Transverse colon (tissue), 4 donors: ENCODE measurements at regions of chr1 and their contacts with region 1.

Region 1: DNA sequence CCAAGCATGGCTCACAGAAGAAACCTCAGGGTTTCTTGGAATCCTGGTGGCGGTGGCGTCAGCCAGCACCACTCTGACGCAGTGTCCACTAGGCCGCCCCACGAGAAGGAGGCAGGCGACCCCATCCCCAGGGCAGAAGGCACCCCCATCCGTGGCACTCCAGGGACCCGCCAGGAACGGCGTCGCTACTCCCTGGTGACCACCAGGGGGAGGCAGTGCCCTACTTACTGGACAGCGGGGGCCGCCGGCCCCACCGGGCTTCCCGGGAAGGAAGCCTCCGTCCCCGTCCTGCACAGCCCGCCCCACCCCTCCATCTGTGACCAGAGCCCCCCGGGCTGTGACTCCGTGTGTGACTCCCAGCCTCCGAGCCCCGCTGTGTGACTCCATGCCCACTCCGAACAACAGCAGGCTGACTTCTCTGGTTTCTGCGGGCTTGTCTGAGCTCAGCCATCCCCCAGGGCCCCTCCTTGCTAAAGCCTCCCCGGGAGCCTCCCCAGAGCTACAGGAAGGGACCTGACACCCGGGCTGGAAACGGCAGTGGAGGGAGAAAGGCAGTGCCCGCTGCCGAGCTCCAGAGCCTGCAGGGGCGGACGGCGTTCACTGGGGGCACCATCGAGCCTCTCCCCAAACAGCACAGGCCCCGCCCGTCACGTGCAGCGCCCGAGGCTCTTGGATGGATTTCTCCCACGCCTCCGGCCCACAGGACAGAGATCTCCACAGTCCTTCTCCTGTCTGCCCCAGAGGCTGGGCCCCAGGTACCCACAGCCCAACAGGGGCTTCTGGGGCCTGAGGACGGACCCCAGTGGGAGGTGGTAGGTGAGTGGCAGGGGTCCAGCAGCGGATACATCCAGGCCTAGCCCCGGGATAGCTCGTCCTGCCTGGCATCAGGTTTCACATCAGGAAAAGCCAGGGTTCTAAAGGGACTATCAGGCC is 21.1 kb downstream of the KIF17 start:
- DNase-seq: peak; percentile 84
- H3K4me3 ChIP-seq: peak overlapping the region; percentile 46 to 65 (median 52)
- H3K27ac ChIP-seq: peak overlapping the region; percentile 63 to 84 (median 82)
- H3K4me1 ChIP-seq: peaks cover 0 to 12% (median 6%) of the 10 kb centered on the region in 4 donors
- H3K27me3 ChIP-seq: no peaks in the 10 kb centered on the region
- CTCF ChIP-seq: peak; percentile 85 to 97 (median 91)
- EP300 ChIP-seq: no peak
- POLR2A ChIP-seq: no peak

Region 2: DNA sequence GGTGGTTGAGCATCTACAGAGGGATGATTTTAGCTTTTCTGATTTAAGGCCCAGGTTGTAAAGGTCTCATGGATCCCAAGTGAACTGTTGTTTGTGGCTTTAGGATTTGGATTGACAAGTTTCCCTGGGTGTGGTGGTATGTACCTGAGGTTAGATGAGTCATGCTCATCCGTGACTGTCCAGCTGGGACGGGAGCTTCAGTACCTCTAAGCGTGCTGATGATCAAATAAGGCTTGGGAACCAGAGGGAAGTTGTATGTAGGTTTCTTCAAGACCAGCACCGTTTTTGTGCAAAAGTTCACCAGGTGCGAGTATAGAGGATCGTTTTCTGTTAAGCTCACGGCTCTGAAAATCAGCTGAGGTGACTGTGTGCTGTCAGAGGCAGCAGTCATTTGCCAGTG is 793.1 kb before region 1 on chr1:
- in situ Hi-C with region 1: no loop called
- intact Hi-C with region 1: no loop called
- DNase-seq: no peak
- H3K4me3 ChIP-seq: no peak overlapping the region
- H3K27ac ChIP-seq: no peak overlapping the region
- H3K4me1 ChIP-seq: no peaks in the 10 kb centered on the region
- H3K27me3 ChIP-seq: no peaks in the 10 kb centered on the region
- CTCF ChIP-seq: no peak
- EP300 ChIP-seq: no peak
- POLR2A ChIP-seq: no peak

Region 3: GRCh38 chr1:20661207-20662109 is 35.2 kb before region 1 on chr1 and contains the start of gene DDOST:
- in situ Hi-C with region 1: no loop called
- intact Hi-C with region 1: no loop called
- DNase-seq: peak; percentile 96
- H3K4me3 ChIP-seq: peak within 1 kb of the TSS; percentile 75 to 99 (median 94)
- H3K27ac ChIP-seq: peak within 1 kb of the TSS; percentile 82 to 91 (median 84)
- H3K4me1 ChIP-seq: peaks cover 11 to 22% (median 19%) of the 10 kb centered on the region in 4 donors
- H3K27me3 ChIP-seq: no peaks in the 10 kb centered on the region
- CTCF ChIP-seq: peak in 4 of 5 experiments; percentile 30 to 61 (median 44)
- EP300 ChIP-seq: no peak
- POLR2A ChIP-seq: peak; percentile 51
- total RNA-seq, gene DDOST: 70.3 to 157 (median 105) TPM

Region 4: DNA sequence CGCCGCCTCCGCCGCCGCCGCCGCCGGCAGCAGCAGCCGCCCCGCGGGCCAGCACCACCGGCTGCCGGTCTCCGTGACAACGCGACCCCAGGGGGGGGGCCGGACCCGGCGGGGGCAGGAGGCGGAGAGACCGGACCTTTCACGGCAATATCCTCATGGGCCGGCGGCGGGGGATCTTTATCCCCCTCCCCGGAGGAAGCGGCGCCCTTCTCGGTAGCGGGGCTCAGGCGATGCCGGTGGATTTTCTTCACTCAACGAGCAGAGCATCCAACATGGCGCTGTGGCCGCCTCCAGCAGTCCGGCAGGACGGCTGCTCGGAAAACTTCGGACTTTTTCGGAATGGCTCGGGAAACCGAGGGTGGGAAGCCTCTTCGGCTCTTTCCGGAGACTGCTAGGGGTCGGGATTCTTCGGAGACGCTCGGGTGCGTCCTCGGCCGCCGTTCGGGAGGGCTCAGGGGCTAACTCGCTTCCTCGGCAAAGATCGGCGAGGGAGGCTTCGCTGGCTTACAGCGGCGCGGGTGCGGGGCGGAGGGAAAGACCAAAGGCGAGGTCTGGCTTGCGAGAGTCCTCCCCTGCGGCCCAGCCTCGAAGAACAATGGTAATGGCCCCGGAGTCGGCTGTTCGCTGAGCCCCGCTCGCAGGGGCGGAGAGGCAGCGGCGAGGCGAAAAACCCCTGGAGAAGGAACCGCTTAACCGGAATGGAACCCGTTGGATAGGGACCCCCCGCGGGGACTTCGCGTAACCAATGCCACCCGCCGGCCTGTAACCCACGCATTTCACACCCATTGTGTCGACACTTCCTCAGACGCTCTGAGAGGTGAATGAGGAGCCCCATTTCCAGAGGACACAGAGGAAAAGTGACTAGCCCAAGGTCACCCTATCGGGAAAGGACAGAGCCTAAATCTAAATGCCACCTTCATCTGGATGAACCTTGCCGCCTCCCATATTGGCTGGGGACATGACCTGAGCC is 480.2 kb after region 1 on chr1 and contains the start of gene EIF4G3:
- in situ Hi-C with region 1: loop called in 1 of 4 experiments (anchors 25 kb)
- intact Hi-C with region 1: no loop called
- DNase-seq: peak; percentile 99
- H3K4me3 ChIP-seq: peak within 1 kb of the TSS; percentile 85 to 96 (median 92)
- H3K27ac ChIP-seq: peak within 1 kb of the TSS; percentile 95 to 98 (median 98)
- H3K4me1 ChIP-seq: peaks cover 7 to 24% (median 16%) of the 10 kb centered on the region in 4 donors
- H3K27me3 ChIP-seq: no peaks in the 10 kb centered on the region
- CTCF ChIP-seq: no peak
- EP300 ChIP-seq: no peak
- POLR2A ChIP-seq: peak; percentile 60
- total RNA-seq, gene EIF4G3: 82.1 to 143 (median 101) TPM

Region 5: GRCh38 chr1:21189906-21190500 is 493.3 kb after region 1 on chr1:
- in situ Hi-C with region 1: loop called in 3 of 4 experiments (anchors 10 to 25 kb)
- intact Hi-C with region 1: loop called (anchors 5 kb)
- DNase-seq: no peak
- H3K4me3 ChIP-seq: no peak overlapping the region
- H3K27ac ChIP-seq: peak overlapping the region; percentile 67 to 83 (median 82)
- H3K4me1 ChIP-seq: peaks cover 0 to 30% (median 19%) of the 10 kb centered on the region in 4 donors
- H3K27me3 ChIP-seq: no peaks in the 10 kb centered on the region
- CTCF ChIP-seq: no peak
- EP300 ChIP-seq: no peak
- POLR2A ChIP-seq: no peak

Region 6: GRCh38 chr1:21200767-21201166 is 504.1 kb after region 1 on chr1:
- in situ Hi-C with region 1: loop called (anchors 10 to 25 kb)
- intact Hi-C with region 1: loop called (anchors 5 kb)
- DNase-seq: no peak
- H3K4me3 ChIP-seq: no peak overlapping the region
- H3K27ac ChIP-seq: no peak overlapping the region
- H3K4me1 ChIP-seq: no peaks in the 10 kb centered on the region
- H3K27me3 ChIP-seq: no peaks in the 10 kb centered on the region
- CTCF ChIP-seq: no peak
- EP300 ChIP-seq: no peak
- POLR2A ChIP-seq: no peak

Region 7: GRCh38 chr1:21216835-21217811 is 520.5 kb after region 1 on chr1:
- in situ Hi-C with region 1: loop called in 1 of 4 experiments (anchors 25 kb)
- intact Hi-C with region 1: no loop called
- DNase-seq: peak; percentile 63
- H3K4me3 ChIP-seq: no peak overlapping the region
- H3K27ac ChIP-seq: no peak overlapping the region
- H3K4me1 ChIP-seq: no peaks in the 10 kb centered on the region
- H3K27me3 ChIP-seq: no peaks in the 10 kb centered on the region
- CTCF ChIP-seq: peak; percentile 67 to 76 (median 73)
- EP300 ChIP-seq: no peak
- POLR2A ChIP-seq: no peak